ENCODE measurements at regions of chr2 and their contacts with region 1.

Region 1: GRCh38 chr2:102806250-102806837 is 44.5 kb downstream of the TMEM182 start:
- DNase-seq: peak; percentile 27
- H3K4me3 ChIP-seq: no peak overlapping the region
- H3K27ac ChIP-seq: no peak overlapping the region
- H3K27me3 ChIP-seq: no peaks in the 10 kb centered on the region
- CTCF ChIP-seq: peak; percentile 90

Region 2: GRCh38 chr2:102585847-102586431 is 220.4 kb before region 1 on chr2:
- CTCF ChIA-PET with region 1: no interaction called
- POLR2A ChIA-PET with region 1: no interaction called
- DNase-seq: no peak
- H3K4me3 ChIP-seq: no peak overlapping the region
- H3K27ac ChIP-seq: no peak overlapping the region
- H3K27me3 ChIP-seq: peaks cover 2% of the 10 kb centered on the region
- CTCF ChIP-seq: no peak

Region 3: GRCh38 chr2:102615622-102616436 is 190.5 kb before region 1 on chr2:
- CTCF ChIA-PET with region 1: interaction called, 10 read pairs
- POLR2A ChIA-PET with region 1: no interaction called
- DNase-seq: peak; percentile 33
- H3K4me3 ChIP-seq: no peak overlapping the region
- H3K27ac ChIP-seq: no peak overlapping the region
- H3K27me3 ChIP-seq: peaks cover 41% of the 10 kb centered on the region
- CTCF ChIP-seq: peak; percentile 100

Region 4: DNA sequence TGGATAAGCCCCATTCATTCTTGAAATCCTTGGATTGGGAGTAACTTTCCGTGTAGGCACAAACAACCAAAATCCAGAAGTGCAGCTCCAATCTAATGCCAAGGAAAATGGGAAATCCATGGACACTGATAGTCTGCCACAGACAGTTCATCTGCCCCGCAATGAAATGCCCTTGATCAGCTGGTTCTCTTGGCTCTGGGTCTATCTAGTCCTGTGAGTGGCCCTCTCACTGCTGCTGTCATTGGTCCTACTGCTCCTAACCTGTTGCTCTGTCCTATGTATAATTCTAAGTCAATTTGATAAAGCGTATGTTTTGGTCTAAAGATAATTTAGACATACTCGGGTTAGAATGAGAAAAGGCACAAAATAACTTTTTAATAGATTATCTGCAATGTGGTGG is 58.2 kb before region 1 on chr2:
- CTCF ChIA-PET with region 1: interaction called, 189 read pairs
- POLR2A ChIA-PET with region 1: no interaction called
- DNase-seq: no peak
- H3K4me3 ChIP-seq: no peak overlapping the region
- H3K27ac ChIP-seq: no peak overlapping the region
- H3K27me3 ChIP-seq: no peaks in the 10 kb centered on the region
- CTCF ChIP-seq: no peak

Region 5: DNA sequence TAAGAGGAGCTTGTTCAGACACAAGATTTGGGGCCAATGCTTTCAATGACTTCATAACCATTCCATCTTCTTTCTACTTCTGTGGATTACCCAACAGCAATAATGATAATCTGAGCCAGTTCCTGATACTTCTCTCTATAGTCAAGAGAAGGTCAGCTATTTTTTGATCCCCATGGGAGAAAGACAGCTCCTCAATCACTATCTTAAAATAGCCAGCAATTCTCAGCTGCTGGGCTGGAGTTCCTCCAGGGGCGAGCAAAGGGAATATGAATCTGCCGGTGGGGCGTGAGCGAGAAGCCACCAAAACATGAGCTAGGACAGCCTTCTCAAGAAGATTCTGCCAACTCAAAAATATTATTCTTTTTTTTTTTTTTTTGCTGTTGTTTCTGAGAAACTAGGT is 44.6 kb before region 1 on chr2 and contains the start of gene TMEM182:
- CTCF ChIA-PET with region 1: interaction called, 42 read pairs
- POLR2A ChIA-PET with region 1: no interaction called
- DNase-seq: no peak
- H3K4me3 ChIP-seq: no peak within 1 kb of the TSS
- H3K27ac ChIP-seq: no peak within 1 kb of the TSS
- H3K27me3 ChIP-seq: no peaks in the 10 kb centered on the region
- CTCF ChIP-seq: no peak
- polyA plus RNA-seq, gene TMEM182: 3.5 and 3.6 TPM in 2 replicates

Region 6: GRCh38 chr2:102782933-102783332 is 23.4 kb before region 1 on chr2:
- CTCF ChIA-PET with region 1: interaction called, 26 read pairs
- POLR2A ChIA-PET with region 1: no interaction called
- DNase-seq: no peak
- H3K4me3 ChIP-seq: no peak overlapping the region
- H3K27ac ChIP-seq: no peak overlapping the region
- H3K27me3 ChIP-seq: no peaks in the 10 kb centered on the region
- CTCF ChIP-seq: no peak